CD4-positive, alpha-beta memory T cell (primary cell): ENCODE measurements at regions of chr11 and their contacts with region 1.

Region 1: GRCh38 chr11:447923-448731 is 2.0 kb upstream of the PTDSS2 start:
- DNase-seq: peak; percentile 90 to 94 (median 91)
- H3K4me3 ChIP-seq: peak overlapping the region; percentile 73 to 76
- H3K4me3 Mint-ChIP-seq: peak overlapping the region; percentile 88 to 93 (median 90)
- H3K27ac ChIP-seq: peak overlapping the region; percentile 85
- H3K27ac Mint-ChIP-seq: peak overlapping the region; percentile 93 to 98 (median 97)
- H3K4me1 ChIP-seq: peaks cover 32% of the 10 kb centered on the region
- H3K4me1 Mint-ChIP-seq: peaks cover 13 to 32% (median 22%) of the 10 kb centered on the region in 4 donors
- H3K27me3 ChIP-seq: no peaks in the 10 kb centered on the region
- H3K27me3 Mint-ChIP-seq: no peaks in the 10 kb centered on the region

Region 2: GRCh38 chr11:236774-237767 is 211.1 kb before region 1 on chr11 and contains the start of gene PSMD13:
- CTCF ChIA-PET with region 1: interaction called, 4 read pairs
- POLR2A ChIA-PET with region 1: interaction called, 9 read pairs
- intact Hi-C with region 1: loop called (anchors 1 kb)
- DNase-seq: peak; percentile 85 to 90 (median 88)
- H3K4me3 ChIP-seq: peak within 1 kb of the TSS; percentile 96 to 100
- H3K4me3 Mint-ChIP-seq: peak within 1 kb of the TSS; percentile 98 to 100 (median 99)
- H3K27ac ChIP-seq: peak within 1 kb of the TSS; percentile 100
- H3K27ac Mint-ChIP-seq: peak within 1 kb of the TSS; percentile 97 to 100 (median 100)
- H3K4me1 ChIP-seq: peaks cover 22% of the 10 kb centered on the region
- H3K4me1 Mint-ChIP-seq: peaks cover 31 to 64% (median 46%) of the 10 kb centered on the region in 4 donors
- H3K27me3 ChIP-seq: no peaks in the 10 kb centered on the region
- H3K27me3 Mint-ChIP-seq: no peaks in the 10 kb centered on the region
- total RNA-seq, gene PSMD13: 99.9 to 107 TPM

Region 3: DNA sequence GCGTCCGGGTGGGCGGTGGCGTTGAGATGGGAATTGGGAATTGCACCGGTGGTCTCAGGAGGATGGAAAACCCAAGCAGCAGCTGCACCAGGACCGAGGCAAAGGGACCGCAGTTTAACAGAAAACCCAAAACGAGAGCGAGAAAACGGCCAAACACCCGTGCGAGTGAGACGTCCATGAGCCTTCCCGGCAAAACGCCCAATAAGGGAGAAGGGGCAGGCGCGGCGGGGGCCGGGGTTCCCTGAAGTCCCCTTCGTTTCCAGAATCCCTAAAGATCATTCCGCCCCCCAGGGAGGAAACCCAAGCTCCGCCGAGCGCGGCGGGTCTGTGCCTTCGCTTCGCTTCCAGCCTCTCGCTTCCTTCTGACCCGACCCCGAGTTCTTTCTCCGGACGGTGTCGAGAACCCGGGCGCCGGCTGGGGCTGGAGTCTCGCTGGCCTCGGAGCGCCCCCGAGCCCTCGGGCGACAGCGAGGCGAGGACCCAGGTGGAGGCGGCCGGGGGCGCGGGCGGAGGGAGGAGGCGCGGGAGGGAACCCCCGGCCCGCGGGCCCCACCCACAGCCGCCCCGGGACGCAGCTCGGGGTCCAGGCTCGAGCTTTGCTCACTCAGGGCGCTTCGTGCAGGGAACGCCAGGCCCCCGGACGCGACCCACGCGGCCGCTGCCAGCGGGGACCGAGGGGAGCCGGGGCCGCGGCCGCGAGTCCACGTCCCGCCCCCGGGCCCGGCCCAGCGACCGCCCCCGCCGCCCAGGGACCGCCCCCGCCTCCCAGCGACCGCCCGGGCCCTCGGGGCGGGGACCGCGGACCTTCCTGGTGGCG is 159.6 kb before region 1 on chr11 and contains the start of gene PGGHG:
- CTCF ChIA-PET with region 1: interaction called, 4 read pairs
- POLR2A ChIA-PET with region 1: interaction called, 32 read pairs
- intact Hi-C with region 1: no loop called
- DNase-seq: peak in 3 of 5 donors; percentile 49 to 60 (median 51)
- H3K4me3 ChIP-seq: peak within 1 kb of the TSS; percentile 83 to 95
- H3K4me3 Mint-ChIP-seq: peak within 1 kb of the TSS; percentile 88 to 99 (median 98)
- H3K27ac ChIP-seq: peak within 1 kb of the TSS; percentile 96
- H3K27ac Mint-ChIP-seq: peak within 1 kb of the TSS; percentile 95 to 100 (median 98)
- H3K4me1 ChIP-seq: peaks cover 38% of the 10 kb centered on the region
- H3K4me1 Mint-ChIP-seq: peaks cover 14 to 51% (median 31%) of the 10 kb centered on the region in 4 donors
- H3K27me3 ChIP-seq: no peaks in the 10 kb centered on the region
- H3K27me3 Mint-ChIP-seq: no peaks in the 10 kb centered on the region
- total RNA-seq, gene PGGHG: 304 TPM

Region 4: GRCh38 chr11:355581-356458 is 92.3 kb before region 1 on chr11:
- CTCF ChIA-PET with region 1: interaction called, 4 read pairs
- POLR2A ChIA-PET with region 1: interaction called, 6 read pairs
- intact Hi-C with region 1: loop called (anchors 2 kb)
- DNase-seq: peak; percentile 85 to 90 (median 86)
- H3K4me3 ChIP-seq: peak overlapping the region in 1 of 2 donors; percentile 59
- H3K4me3 Mint-ChIP-seq: peak overlapping the region; percentile 77 to 91 (median 84)
- H3K27ac ChIP-seq: peak overlapping the region; percentile 89
- H3K27ac Mint-ChIP-seq: peak overlapping the region in 6 of 7 donors; percentile 96 to 99 (median 97)
- H3K4me1 ChIP-seq: peaks cover 20% of the 10 kb centered on the region
- H3K4me1 Mint-ChIP-seq: peaks cover 7 to 50% (median 29%) of the 10 kb centered on the region in 4 donors
- H3K27me3 ChIP-seq: no peaks in the 10 kb centered on the region
- H3K27me3 Mint-ChIP-seq: no peaks in the 10 kb centered on the region

Region 5: GRCh38 chr11:406978-407739 is 41.0 kb before region 1 on chr11:
- CTCF ChIA-PET with region 1: interaction called, 103 read pairs
- POLR2A ChIA-PET with region 1: interaction called, 539 read pairs
- intact Hi-C with region 1: loop called (anchors 1 kb)
- DNase-seq: peak; percentile 93 to 97 (median 95)
- H3K4me3 ChIP-seq: peak overlapping the region in 1 of 2 donors; percentile 28
- H3K4me3 Mint-ChIP-seq: peak overlapping the region in 5 of 8 donors; percentile 28 to 62 (median 41)
- H3K27ac ChIP-seq: peak overlapping the region; percentile 59
- H3K27ac Mint-ChIP-seq: peak overlapping the region; percentile 22 to 92 (median 72)
- H3K4me1 ChIP-seq: peaks cover 21% of the 10 kb centered on the region
- H3K4me1 Mint-ChIP-seq: peaks cover 0 to 18% (median 9%) of the 10 kb centered on the region in 4 donors
- H3K27me3 ChIP-seq: no peaks in the 10 kb centered on the region
- H3K27me3 Mint-ChIP-seq: no peaks in the 10 kb centered on the region

Region 6: GRCh38 chr11:488999-489398 is 40.9 kb after region 1 on chr11:
- CTCF ChIA-PET with region 1: no interaction called
- POLR2A ChIA-PET with region 1: no interaction called
- intact Hi-C with region 1: no loop called
- DNase-seq: no peak
- H3K4me3 ChIP-seq: no peak overlapping the region
- H3K4me3 Mint-ChIP-seq: no peak overlapping the region
- H3K27ac ChIP-seq: no peak overlapping the region
- H3K27ac Mint-ChIP-seq: no peak overlapping the region
- H3K4me1 ChIP-seq: no peaks in the 10 kb centered on the region
- H3K4me1 Mint-ChIP-seq: no peaks in the 10 kb centered on the region
- H3K27me3 ChIP-seq: no peaks in the 10 kb centered on the region
- H3K27me3 Mint-ChIP-seq: no peaks in the 10 kb centered on the region

Region 7: GRCh38 chr11:518463-519250 is 70.5 kb after region 1 on chr11:
- CTCF ChIA-PET with region 1: no interaction called
- POLR2A ChIA-PET with region 1: no interaction called
- intact Hi-C with region 1: loop called (anchors 2 kb)
- DNase-seq: peak; percentile 82 to 91 (median 84)
- H3K4me3 ChIP-seq: peak overlapping the region in 1 of 2 donors; percentile 30
- H3K4me3 Mint-ChIP-seq: peak overlapping the region; percentile 20 to 91 (median 84)
- H3K27ac ChIP-seq: no peak overlapping the region
- H3K27ac Mint-ChIP-seq: peak overlapping the region; percentile 80 to 92 (median 88)
- H3K4me1 ChIP-seq: peaks cover 4% of the 10 kb centered on the region
- H3K4me1 Mint-ChIP-seq: peaks cover 2 to 12% (median 3%) of the 10 kb centered on the region in 4 donors
- H3K27me3 ChIP-seq: no peaks in the 10 kb centered on the region
- H3K27me3 Mint-ChIP-seq: no peaks in the 10 kb centered on the region

Region 8: GRCh38 chr11:545171-545570 is 97.0 kb after region 1 on chr11:
- CTCF ChIA-PET with region 1: no interaction called
- POLR2A ChIA-PET with region 1: no interaction called
- intact Hi-C with region 1: no loop called
- DNase-seq: no peak
- H3K4me3 ChIP-seq: no peak overlapping the region
- H3K4me3 Mint-ChIP-seq: no peak overlapping the region
- H3K27ac ChIP-seq: no peak overlapping the region
- H3K27ac Mint-ChIP-seq: no peak overlapping the region
- H3K4me1 ChIP-seq: no peaks in the 10 kb centered on the region
- H3K4me1 Mint-ChIP-seq: peaks cover 0 to 2% (median under 1%) of the 10 kb centered on the region in 4 donors
- H3K27me3 ChIP-seq: no peaks in the 10 kb centered on the region
- H3K27me3 Mint-ChIP-seq: no peaks in the 10 kb centered on the region